ENCODE measurements at regions of chr19 and their contacts with region 1.

Region 1: DNA sequence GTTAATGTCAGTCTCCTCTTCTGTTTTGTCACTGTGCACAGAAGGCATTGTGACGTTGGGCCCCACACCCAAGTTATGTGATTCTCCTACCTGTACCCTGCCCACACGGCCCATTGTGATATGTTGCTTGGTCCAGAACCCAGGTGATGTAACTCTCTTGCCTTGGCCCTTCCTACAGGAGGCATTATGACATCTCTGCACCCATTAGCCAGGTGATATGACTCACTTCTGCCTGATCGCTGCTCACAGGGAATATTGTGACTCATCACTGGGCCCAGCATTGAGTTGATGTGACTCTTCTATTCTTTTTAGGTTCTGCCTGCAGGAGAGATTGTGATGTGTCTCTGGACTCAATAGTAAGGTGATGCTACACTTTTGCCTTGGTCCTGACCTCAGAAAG is 65.4 kb upstream of the ZNF91 start:
- DNase-seq: no peak
- H3K4me3 ChIP-seq: no peak overlapping the region
- CTCF ChIP-seq: no peak

Region 2: GRCh38 chr19:23377276-23377675 is 83.4 kb before region 1 on chr19:
- in situ Hi-C with region 1: no loop called
- DNase-seq: no peak
- H3K4me3 ChIP-seq: no peak overlapping the region
- CTCF ChIP-seq: no peak

Region 3: GRCh38 chr19:23558541-23558940 is 97.9 kb after region 1 on chr19:
- in situ Hi-C with region 1: loop called (anchors 5 kb)
- DNase-seq: no peak
- H3K4me3 ChIP-seq: no peak overlapping the region
- CTCF ChIP-seq: no peak